Panc1 (cell line): ENCODE measurements at regions of chr13 and their contacts with region 1.

Region 1: GRCh38 chr13:45695198-45695730 is 6.9 kb upstream of the CBY2 start:
- DNase-seq: no peak
- ATAC-seq: no peak
- H3K4me3 ChIP-seq: no peak overlapping the region
- H3K27ac ChIP-seq: no peak overlapping the region
- H3K4me1 ChIP-seq: no peaks in the 10 kb centered on the region
- H3K27me3 ChIP-seq: no peaks in the 10 kb centered on the region; the same call in 1 of the 2 replicates
- CTCF ChIP-seq: no peak

Region 2: DNA sequence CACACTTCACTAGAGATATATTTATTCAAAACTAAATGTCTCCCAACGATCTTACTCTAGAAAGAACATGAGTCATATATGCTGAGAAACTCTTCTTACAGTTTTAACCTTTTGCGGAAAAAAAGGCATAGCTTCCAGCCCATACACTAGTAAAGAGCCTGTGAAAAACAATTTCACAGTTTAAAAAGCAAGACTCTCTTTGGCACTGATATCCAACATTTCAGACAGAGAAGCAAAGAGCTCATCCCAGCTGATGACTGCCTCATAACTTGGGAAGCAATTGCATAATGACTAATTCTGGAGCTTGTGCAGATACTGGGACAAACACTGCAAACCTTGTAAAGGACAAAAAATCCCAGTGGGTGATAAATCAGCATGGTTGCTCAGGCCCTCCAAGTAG is 1996.5 kb before region 1 on chr13:
- CTCF ChIA-PET with region 1: no interaction called
- POLR2A ChIA-PET with region 1: interaction called, 12 read pairs
- in situ Hi-C with region 1: no loop called
- intact Hi-C with region 1: no loop called
- DNase-seq: no peak
- ATAC-seq: no peak
- H3K4me3 ChIP-seq: no peak overlapping the region
- H3K27ac ChIP-seq: no peak overlapping the region
- H3K4me1 ChIP-seq: no peaks in the 10 kb centered on the region
- H3K27me3 ChIP-seq: no peaks in the 10 kb centered on the region
- CTCF ChIP-seq: no peak

Region 3: DNA sequence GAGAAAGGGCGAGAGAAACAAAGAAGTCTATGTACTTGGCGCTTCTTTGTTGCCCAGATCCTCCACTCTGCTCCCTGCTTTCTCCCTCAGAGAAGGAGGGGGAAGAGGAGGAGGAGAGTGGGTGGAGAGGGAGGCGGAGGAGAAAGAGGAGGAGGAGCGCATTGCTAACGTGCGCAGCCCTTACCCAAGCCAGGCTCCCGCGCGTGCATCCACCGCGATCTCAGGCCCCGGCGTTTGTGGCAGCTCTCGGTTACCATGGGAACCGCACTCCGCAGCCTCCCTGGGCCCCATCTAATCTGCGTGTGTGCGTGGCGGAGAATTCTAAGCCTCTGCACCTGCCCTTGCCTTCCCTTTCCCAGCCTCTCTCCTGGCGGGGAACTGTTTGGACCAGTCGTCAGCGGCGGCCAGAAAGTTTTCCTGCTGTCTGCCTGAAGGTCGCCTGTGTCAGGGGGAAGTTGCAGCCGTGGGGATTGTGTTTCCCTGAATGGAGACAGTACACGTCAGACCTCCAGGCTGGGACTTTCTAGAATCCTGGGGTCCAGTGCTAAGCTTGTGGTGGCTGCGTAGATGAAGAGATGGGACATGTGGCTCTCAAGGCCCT is 79.7 kb before region 1 on chr13 and contains the start of gene ERICH6B:
- CTCF ChIA-PET with region 1: no interaction called
- POLR2A ChIA-PET with region 1: no interaction called
- in situ Hi-C with region 1: no loop called
- intact Hi-C with region 1: no loop called
- DNase-seq: no peak
- ATAC-seq: peak; percentile 56; the same call in 1 of the 2 replicates
- H3K4me3 ChIP-seq: no peak within 1 kb of the TSS
- H3K27ac ChIP-seq: no peak within 1 kb of the TSS
- H3K4me1 ChIP-seq: no peaks in the 10 kb centered on the region
- H3K27me3 ChIP-seq: peaks cover 2% of the 10 kb centered on the region; the same call in 1 of the 2 replicates
- CTCF ChIP-seq: no peak
- total RNA-seq, gene ERICH6B: not detected

Region 4: DNA sequence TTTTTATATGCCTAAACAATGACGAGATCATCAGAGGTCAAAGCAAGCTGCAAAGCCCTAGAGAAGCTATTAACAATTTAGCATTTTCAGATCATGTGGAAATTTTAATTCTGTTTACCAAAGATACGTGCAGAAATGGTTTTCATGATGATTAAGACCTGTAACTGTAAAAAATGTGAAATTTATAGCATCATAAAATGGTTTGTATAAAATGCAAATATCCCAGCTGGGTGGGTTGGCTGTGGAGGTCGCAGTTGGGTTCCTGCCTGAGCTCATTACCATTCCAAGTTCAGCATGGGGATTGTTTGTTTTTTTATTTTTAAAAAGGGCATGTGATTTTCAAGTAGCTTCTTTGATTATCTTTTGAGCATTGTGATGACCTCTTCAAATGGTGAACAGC is 204.1 kb after region 1 on chr13:
- CTCF ChIA-PET with region 1: no interaction called
- POLR2A ChIA-PET with region 1: no interaction called
- in situ Hi-C with region 1: no loop called
- intact Hi-C with region 1: no loop called
- DNase-seq: no peak
- ATAC-seq: no peak
- H3K4me3 ChIP-seq: no peak overlapping the region
- H3K27ac ChIP-seq: no peak overlapping the region
- H3K4me1 ChIP-seq: no peaks in the 10 kb centered on the region
- H3K27me3 ChIP-seq: peaks cover 2% of the 10 kb centered on the region; the same call in 1 of the 2 replicates
- CTCF ChIP-seq: no peak